WTC11 (cell line): ENCODE measurements at regions of chr9 and their contacts with region 1.

Region 1: DNA sequence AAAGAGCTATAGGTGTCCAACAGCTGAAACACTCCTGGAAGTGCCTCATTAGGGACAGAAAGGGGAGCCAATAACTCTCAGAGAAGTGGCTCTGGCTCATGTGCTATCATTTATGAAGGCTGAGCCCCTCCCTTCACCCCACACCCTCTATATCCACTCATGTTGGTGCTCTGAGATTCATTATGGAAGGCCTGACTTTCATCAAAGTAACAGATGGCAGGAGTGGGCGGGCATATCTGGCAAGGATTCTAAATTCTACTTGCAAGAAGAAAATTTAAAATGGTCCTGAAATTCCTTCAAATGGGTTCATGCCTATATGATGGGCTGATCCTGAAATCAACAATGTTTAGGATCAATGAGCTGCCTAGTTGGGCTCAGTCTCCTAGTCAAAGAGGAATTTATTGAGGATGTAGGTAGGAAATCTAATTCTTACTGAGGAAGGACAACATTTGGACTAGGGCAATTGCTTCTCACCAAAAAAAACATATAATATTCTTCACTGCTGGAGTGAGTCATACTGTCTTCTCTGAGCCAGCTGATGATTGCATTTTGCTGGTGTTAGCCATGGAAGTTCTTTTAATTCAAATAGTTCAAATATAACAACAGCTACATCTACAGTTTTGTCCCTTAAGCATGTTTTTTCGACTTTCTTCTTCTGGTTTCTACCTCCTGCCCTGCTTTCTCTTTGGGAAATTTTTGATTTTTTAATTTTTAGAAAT is 23.5 kb downstream of the NMRK1 start:
- DNase-seq: no peak
- ATAC-seq: no peak
- H3K4me3 Mint-ChIP-seq: no peak overlapping the region
- H3K27ac Mint-ChIP-seq: no peak overlapping the region
- H3K4me1 Mint-ChIP-seq: peaks cover 7% of the 10 kb centered on the region
- H3K27me3 Mint-ChIP-seq: no peaks in the 10 kb centered on the region
- CTCF ChIP-seq: no peak

Region 2: DNA sequence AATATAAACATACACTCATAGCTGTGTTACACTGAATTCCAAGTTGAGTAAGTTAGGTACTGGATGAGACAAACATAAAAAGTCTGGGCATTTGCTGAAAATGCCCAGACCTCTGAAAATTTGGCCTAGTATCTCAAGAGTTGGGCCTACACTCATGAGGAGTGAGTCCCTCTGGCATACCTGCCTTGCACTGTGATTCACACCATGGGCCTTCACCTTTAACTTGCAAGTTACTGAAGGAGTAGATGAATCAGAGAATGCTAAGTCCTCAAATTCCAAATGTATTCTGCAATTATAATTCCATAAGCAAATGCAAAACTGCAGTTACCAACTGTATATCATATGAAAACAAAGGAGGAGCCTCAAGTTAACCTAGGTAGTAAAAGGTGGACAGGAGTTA is 79.4 kb before region 1 on chr9:
- CTCF ChIA-PET with region 1: no interaction called
- POLR2A ChIA-PET with region 1: no interaction called
- DNase-seq: no peak
- ATAC-seq: no peak
- H3K4me3 Mint-ChIP-seq: no peak overlapping the region
- H3K27ac Mint-ChIP-seq: no peak overlapping the region
- H3K4me1 Mint-ChIP-seq: no peaks in the 10 kb centered on the region
- H3K27me3 Mint-ChIP-seq: no peaks in the 10 kb centered on the region
- CTCF ChIP-seq: no peak

Region 3: DNA sequence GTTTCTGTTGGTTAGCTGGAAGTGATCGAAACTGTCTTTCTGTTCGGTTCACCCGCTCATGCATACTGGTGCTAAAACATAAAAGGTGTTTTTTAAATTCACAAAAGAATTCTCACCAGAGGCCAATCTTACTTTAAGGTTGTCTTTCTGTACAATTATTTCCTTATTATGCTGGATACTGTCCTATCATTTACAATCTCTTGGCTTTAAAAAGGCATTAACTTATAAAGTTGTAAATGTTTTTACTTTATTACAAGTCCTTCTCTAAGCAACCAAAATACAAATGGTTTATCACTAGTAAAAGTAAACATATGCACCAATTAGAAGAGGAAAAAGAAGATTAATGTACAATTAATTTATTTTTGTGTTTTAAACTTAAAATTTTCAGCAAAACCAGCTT is 47.1 kb before region 1 on chr9:
- CTCF ChIA-PET with region 1: no interaction called
- POLR2A ChIA-PET with region 1: no interaction called
- DNase-seq: no peak
- ATAC-seq: no peak
- H3K4me3 Mint-ChIP-seq: no peak overlapping the region
- H3K27ac Mint-ChIP-seq: no peak overlapping the region
- H3K4me1 Mint-ChIP-seq: peaks cover 6% of the 10 kb centered on the region
- H3K27me3 Mint-ChIP-seq: no peaks in the 10 kb centered on the region
- CTCF ChIP-seq: no peak

Region 4: DNA sequence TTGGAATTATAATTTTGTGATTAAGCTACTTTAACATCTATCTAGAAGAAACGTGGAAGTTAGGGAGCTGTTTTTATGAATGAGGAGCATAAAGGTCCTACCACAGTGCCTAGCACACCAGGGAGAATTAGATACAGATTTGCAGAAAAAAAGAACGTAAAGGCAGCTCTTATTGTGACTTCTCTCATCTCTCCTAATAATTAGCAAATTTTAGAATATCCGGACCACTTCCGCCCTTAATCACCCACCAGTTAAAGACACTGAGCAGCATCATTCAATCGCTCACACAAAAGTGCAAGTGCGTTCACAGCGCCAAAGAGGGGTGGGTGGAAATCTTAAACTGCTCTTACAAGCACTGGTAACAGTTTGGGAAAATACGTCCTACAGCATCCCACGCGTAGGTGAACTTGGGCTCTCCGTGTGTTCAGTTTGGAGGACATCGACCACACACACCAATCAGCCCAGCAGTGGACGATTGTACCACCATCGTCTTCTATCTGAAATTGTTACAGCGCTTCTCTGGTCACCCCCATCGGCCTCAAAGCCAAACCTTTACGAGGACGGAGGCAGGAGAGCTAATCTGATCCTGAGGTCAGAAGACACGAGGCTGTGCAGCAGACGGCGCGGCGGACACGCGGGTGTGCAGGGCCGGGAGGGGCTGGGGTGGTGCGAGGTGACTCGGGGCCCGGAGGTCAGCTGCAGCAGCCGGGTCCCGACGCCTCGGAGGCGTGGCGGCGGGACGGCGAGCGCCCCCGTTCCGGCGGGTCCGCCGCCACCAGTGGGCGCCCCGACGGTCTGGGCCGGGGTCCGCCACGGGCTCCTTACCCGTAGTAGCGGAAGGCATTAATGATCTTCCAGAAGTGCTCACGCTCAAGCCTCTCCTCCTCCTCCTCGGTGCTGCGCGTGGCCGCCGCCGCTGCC is 37.0 kb before region 1 on chr9:
- CTCF ChIA-PET with region 1: interaction called, 10 read pairs
- POLR2A ChIA-PET with region 1: interaction called, 5 read pairs
- DNase-seq: peak; percentile 54
- ATAC-seq: peak; percentile 20
- H3K4me3 Mint-ChIP-seq: peak overlapping the region; percentile 91
- H3K27ac Mint-ChIP-seq: peak overlapping the region; percentile 96
- H3K4me1 Mint-ChIP-seq: peaks cover 25% of the 10 kb centered on the region
- H3K27me3 Mint-ChIP-seq: no peaks in the 10 kb centered on the region
- CTCF ChIP-seq: no peak

Region 5: GRCh38 chr9:75142202-75142601 is 77.7 kb after region 1 on chr9:
- CTCF ChIA-PET with region 1: no interaction called
- POLR2A ChIA-PET with region 1: no interaction called
- DNase-seq: no peak
- ATAC-seq: no peak
- H3K4me3 Mint-ChIP-seq: no peak overlapping the region
- H3K27ac Mint-ChIP-seq: no peak overlapping the region
- H3K4me1 Mint-ChIP-seq: no peaks in the 10 kb centered on the region
- H3K27me3 Mint-ChIP-seq: no peaks in the 10 kb centered on the region
- CTCF ChIP-seq: no peak